ENCODE measurements at regions of chr7 and their contacts with region 1.

Region 1: DNA sequence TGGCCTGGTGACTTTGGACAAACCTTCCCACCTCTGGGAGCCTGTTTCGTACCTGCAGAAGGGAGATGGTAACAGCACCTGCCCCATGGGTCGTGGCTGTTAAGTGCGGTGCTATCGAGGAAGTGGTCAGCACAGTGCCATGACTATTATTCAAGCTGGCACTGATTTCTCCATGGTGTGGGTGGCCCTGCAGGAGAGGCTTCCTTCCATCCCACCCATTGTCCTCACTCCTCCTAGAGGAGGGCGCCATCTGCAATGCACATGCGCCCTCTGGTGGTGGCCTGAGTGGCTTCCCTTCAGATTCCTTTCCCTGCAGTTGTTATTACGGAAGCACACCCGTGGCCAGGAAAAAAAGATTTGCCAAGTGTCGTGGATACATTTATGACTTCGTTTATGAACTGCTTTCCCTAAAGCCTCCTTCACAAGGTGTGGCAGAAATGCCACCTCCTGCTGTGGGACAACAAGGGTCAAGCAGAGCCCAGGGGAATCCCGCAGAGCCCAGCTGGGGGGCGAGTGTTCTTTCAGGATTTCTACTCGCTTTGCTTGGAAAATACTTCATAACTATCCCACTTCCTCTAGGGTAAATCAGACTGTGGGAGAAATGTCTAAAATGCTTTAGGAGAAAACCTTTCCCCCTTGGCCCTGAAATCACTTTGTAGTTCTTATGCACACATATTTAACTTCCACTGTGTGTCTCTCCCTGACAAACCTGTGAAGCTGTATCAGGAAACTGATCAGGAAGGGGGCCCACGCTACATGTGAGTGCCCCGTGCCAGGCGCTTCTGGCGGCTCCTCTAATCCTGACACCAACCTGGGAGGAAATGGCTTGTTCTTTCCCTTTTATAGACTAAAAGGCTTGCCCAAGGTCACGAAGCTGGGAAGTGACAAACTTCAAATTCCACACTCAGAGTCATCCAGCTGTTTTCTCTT is 98.0 kb upstream of the ANLN start:
- DNase-seq: peak; percentile 76
- ATAC-seq: peak; percentile 61
- H3K4me3 Mint-ChIP-seq: peak overlapping the region; percentile 27
- H3K27ac Mint-ChIP-seq: no peak overlapping the region
- H3K4me1 Mint-ChIP-seq: peaks cover 34% of the 10 kb centered on the region
- H3K27me3 Mint-ChIP-seq: no peaks in the 10 kb centered on the region

Region 2: DNA sequence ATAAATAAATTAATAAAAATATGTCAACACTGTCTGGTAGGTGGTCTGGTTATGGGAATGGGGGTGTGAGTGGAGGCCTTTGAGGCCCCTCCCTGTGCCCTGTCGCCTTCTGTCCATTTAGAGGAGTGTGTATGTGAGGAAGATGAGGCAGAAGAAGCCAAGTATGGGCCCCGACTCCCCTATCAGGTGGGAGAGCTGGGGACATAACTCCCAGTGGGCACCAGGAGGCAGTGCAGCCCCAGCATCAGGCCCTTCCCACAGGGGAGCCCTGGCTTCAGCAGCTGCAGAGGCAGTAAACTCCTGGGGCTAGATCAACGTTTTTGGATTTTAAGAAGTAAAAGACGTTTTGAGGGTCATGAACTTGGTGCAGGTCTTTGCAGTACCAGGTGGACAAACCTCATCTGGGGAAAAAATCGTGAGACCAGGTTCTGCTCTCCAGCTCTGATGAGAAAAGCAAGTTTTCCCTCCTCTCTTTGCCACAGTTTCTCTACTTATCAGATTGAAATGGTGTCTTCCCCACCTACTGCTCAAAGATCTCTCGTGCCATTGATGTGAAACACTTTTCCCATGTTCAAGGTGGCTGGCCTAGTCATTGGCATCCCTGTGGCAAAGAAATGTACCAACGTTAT is 306.4 kb before region 1 on chr7:
- CTCF ChIA-PET with region 1: interaction called, 91 read pairs
- POLR2A ChIA-PET with region 1: interaction called, 3 read pairs
- DNase-seq: peak; percentile 76
- ATAC-seq: peak; percentile 97
- H3K4me3 Mint-ChIP-seq: no peak overlapping the region
- H3K27ac Mint-ChIP-seq: no peak overlapping the region
- H3K4me1 Mint-ChIP-seq: no peaks in the 10 kb centered on the region
- H3K27me3 Mint-ChIP-seq: peaks cover 2% of the 10 kb centered on the region

Measured in activated CD8-positive, alpha-beta T cell treated with anti-CD3 and anti-CD28 coated beads, Interleukin-2, amount 10 ng/mL, durations not matched to agents 7 days and 5 days (primary cell).